Heart right ventricle (tissue), 16 donors: ENCODE measurements at regions of chr12 and their contacts with region 1.

Region 1: DNA sequence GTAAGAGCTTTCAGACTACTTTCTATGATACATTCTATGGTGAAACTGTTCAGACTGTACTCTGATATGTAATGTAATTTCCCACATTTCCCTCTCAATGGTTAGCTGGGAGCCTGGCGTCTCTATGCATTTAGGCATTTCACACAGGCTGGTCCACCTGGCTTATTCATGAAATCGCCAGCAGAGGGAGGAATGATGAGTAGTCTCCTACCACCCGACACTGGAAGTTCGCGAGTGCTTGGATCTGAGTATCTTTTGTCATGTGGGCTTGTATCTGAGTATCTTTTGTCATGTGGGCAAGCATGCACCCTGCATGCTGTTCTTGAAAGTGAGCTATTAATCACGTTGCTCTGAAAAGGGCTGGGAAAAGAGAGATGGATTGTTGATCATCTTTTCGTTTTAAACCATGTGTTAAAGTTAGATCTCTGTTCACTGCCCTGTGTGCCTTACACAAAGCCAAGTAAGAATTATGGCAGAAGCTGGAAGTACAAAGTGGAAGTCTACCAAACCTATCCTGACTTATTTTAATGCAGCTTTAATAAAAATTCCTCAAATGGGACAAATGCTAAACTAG is 235.0 kb downstream of the ATP23 start:
- DNase-seq: peak in 1 of 2 donors; percentile 29
- ATAC-seq: peak in 1 of 8 donors; percentile 48
- H3K4me3 ChIP-seq: no peak overlapping the region
- H3K27ac ChIP-seq: no peak overlapping the region
- H3K4me1 ChIP-seq: peaks cover 0 to 7% (median 0%) of the 10 kb centered on the region in 9 donors
- H3K27me3 ChIP-seq: no peaks in the 10 kb centered on the region
- CTCF ChIP-seq: peak in 8 of 9 donors; percentile 20 to 67 (median 50)

Region 2: DNA sequence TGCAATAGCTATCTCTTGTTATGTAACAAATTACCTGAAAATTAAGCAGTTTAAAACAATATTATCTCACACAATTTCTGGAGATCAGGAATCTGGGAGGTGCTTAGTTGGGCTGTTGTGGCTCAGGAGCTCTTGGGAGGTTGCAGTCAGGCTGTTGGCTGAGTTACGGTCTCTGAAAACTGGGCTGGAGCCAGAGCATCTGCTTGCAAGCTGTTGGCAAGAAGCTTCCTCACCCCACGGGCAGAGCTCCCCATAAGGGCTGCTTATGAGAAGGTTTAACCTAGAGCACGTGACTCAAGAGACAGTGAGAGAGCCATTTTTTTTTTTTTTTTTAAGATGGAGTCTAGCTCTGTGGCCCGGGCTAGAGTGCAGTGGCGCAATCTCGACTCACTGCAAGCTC is 111.8 kb after region 1 on chr12:
- intact Hi-C with region 1: loop called in 1 of 10 experiments (anchors 10 kb)
- DNase-seq: no peak
- ATAC-seq: peak in 2 of 8 donors; percentile 17 to 20
- H3K4me3 ChIP-seq: no peak overlapping the region
- H3K27ac ChIP-seq: no peak overlapping the region
- H3K4me1 ChIP-seq: peaks cover 0 to 12% (median 6%) of the 10 kb centered on the region in 9 donors
- H3K27me3 ChIP-seq: no peaks in the 10 kb centered on the region
- CTCF ChIP-seq: no peak

Region 3: GRCh38 chr12:58302485-58303011 is 126.2 kb after region 1 on chr12:
- intact Hi-C with region 1: loop called in 3 of 10 experiments (anchors 5 to 10 kb)
- DNase-seq: peak in 1 of 2 donors; percentile 4
- ATAC-seq: no peak
- H3K4me3 ChIP-seq: no peak overlapping the region
- H3K27ac ChIP-seq: no peak overlapping the region
- H3K4me1 ChIP-seq: peaks cover 0 to 11% (median 0%) of the 10 kb centered on the region in 9 donors
- H3K27me3 ChIP-seq: no peaks in the 10 kb centered on the region
- CTCF ChIP-seq: peak in 5 of 9 donors; percentile 15 to 53 (median 44)